PC-3 (cell line): ENCODE measurements at regions of chr7 and their contacts with region 1.

Region 1: DNA sequence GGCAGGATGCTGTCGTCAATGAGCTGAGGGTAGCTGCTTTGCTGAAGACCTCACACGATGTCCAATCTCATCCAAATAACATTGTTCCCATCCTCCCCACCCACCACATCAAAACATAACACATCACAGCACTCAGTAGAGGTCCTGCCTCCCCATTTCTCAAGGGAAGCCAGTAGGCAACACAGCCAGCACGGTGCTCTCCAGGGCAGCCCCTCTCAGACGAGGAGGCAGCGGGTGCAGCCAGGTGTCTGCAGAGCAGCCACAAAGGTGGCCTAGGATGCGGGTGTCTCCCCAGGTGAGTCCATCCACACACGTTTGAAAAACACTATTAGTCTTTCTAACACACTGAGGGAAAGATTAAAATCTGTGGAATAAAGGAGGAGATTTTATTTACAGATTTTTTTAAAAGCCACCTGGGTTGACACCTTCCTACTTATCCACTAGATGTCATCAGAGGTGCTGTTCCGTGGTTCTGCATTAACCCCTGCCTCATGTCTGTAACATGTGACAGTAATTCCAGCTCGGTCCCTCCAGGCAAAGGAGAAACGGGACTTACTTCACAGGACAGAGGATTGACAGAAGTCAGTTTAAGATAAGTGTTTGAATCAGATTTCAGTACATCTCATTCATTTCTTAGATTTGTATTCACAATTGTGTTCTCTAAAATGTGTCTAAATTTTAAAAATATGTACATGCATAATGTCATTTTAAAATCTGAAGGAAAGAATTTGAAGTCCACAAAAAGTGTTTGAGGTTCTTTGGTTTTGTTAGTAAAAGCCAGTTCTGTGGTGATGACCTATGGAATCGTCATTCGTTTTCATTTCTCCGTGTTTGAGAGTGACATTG is 68.0 kb downstream of the LANCL2 start:
- DNase-seq: peak; percentile 66
- ATAC-seq: peak; percentile 89
- H3K4me3 ChIP-seq: no peak overlapping the region
- H3K27ac ChIP-seq: no peak overlapping the region
- H3K4me1 ChIP-seq: peaks cover under 1% of the 10 kb centered on the region; the same call in 1 of the 2 replicates
- H3K27me3 ChIP-seq: no peaks in the 10 kb centered on the region
- CTCF ChIP-seq: peak; percentile 75

Region 2: DNA sequence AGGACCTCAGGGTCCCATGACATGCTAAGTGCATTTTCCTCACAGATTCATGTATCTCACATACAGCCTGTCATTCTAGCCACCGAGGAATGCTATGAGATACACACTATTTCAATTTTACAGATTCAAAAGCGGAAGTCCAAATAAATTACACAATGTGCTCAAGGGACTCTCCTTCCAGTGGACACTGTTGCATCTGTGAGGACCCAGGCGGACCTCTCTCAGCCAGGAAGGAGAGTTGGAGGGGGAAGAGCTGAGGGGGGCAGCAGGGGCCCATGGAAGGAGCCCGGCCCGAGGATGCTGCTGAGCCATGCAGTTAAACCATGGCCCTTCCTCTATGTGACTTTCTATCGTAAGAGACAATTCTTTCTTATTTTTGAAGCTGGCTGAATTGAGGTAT is 45.5 kb after region 1 on chr7:
- CTCF ChIA-PET with region 1: no interaction called
- POLR2A ChIA-PET with region 1: no interaction called
- intact Hi-C with region 1: loop called (anchors 1 kb)
- DNase-seq: no peak
- ATAC-seq: no peak
- H3K4me3 ChIP-seq: no peak overlapping the region
- H3K27ac ChIP-seq: no peak overlapping the region
- H3K4me1 ChIP-seq: no peaks in the 10 kb centered on the region
- H3K27me3 ChIP-seq: no peaks in the 10 kb centered on the region
- CTCF ChIP-seq: no peak

Region 3: DNA sequence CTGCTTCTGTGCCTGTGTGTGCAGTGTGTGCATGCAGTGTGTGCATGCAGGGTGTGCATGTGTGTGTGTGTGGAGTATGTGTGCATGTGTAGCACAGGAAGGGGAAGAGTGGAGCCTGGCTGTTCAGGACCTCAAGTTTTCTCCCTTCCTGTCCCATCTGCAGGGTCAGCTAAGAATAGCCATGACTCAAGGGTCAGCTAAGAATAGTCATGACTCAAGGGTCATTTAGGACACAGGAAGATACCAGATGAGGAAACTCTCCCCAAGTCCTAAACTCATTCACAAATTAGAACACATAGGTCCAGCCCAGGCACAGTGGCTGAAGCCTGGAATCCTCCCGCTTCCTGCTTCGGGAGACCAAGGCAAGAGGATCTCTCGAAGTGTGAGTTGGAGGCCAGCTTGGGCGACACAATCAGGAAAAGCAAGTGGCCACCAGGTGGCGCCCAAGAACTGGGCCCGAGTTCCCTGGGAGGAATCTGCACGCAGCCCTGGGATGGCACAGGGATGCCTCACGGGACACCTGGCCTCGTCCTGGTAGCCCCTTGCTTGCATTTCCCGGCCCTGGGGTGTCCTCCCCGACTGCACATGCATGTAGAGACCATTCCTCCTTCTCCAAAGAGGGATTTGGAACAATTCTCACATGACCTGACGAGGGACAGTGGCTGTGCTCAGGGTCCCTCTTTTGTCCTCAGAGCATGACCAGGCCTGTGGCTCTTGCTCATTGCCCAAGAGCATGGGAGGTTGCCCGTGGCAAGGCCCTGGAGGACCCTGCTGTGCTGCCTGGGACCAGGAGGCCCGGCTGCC is 160.6 kb after region 1 on chr7:
- CTCF ChIA-PET with region 1: interaction called, 4 read pairs
- POLR2A ChIA-PET with region 1: no interaction called
- intact Hi-C with region 1: loop called (anchors 1 kb)
- DNase-seq: peak; percentile 79
- ATAC-seq: peak; percentile 89
- H3K4me3 ChIP-seq: no peak overlapping the region
- H3K27ac ChIP-seq: no peak overlapping the region
- H3K4me1 ChIP-seq: no peaks in the 10 kb centered on the region
- H3K27me3 ChIP-seq: no peaks in the 10 kb centered on the region
- CTCF ChIP-seq: peak; percentile 86